Activated CD4-positive, alpha-beta memory T cell treated with anti-CD3 and anti-CD28 coated beads for 36 hours (primary cell): ENCODE measurements at regions of chr1 and their contacts with region 1.

Region 1: GRCh38 chr1:156480411-156481192 is 20.0 kb downstream of the MEF2D start:
- DNase-seq: peak; percentile 83
- H3K4me3 Mint-ChIP-seq: peak overlapping the region; percentile 39
- H3K27ac Mint-ChIP-seq: peak overlapping the region; percentile 79
- H3K4me1 Mint-ChIP-seq: peaks cover 66% of the 10 kb centered on the region
- H3K27me3 Mint-ChIP-seq: no peaks in the 10 kb centered on the region

Region 2: GRCh38 chr1:156465747-156466365 is 14.7 kb before region 1 on chr1:
- CTCF ChIA-PET with region 1: interaction called, 16 read pairs
- POLR2A ChIA-PET with region 1: interaction called, 3 read pairs
- intact Hi-C with region 1: no loop called
- DNase-seq: peak; percentile 35
- H3K4me3 Mint-ChIP-seq: no peak overlapping the region
- H3K27ac Mint-ChIP-seq: peak overlapping the region; percentile 12
- H3K4me1 Mint-ChIP-seq: peaks cover 8% of the 10 kb centered on the region
- H3K27me3 Mint-ChIP-seq: no peaks in the 10 kb centered on the region

Region 3: DNA sequence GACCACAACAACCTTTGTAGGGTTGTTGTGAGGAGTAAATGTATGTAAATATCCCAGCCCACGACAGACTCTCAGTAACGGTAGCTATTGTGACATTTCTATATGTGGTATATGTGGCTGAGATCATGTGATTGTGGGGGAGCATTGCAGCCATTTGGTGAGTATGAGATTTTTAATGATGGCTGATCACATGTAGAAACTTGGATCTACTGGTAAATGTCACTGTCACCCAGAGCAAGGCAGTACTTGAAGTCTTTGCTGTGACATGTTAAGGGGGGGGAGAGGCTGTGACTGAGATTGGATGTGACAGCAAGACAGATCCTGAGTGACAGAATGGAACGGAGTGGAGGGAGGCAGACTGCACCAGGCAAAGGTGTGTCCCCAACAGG is 43.9 kb after region 1 on chr1:
- CTCF ChIA-PET with region 1: interaction called, 16 read pairs
- POLR2A ChIA-PET with region 1: no interaction called
- intact Hi-C with region 1: no loop called
- DNase-seq: peak; percentile 22
- H3K4me3 Mint-ChIP-seq: no peak overlapping the region
- H3K27ac Mint-ChIP-seq: no peak overlapping the region
- H3K4me1 Mint-ChIP-seq: peaks cover 27% of the 10 kb centered on the region
- H3K27me3 Mint-ChIP-seq: no peaks in the 10 kb centered on the region

Region 4: GRCh38 chr1:156556354-156556753 is 75.8 kb after region 1 on chr1:
- CTCF ChIA-PET with region 1: interaction called, 11 read pairs
- POLR2A ChIA-PET with region 1: no interaction called
- intact Hi-C with region 1: no loop called
- DNase-seq: no peak
- H3K4me3 Mint-ChIP-seq: no peak overlapping the region
- H3K27ac Mint-ChIP-seq: no peak overlapping the region
- H3K4me1 Mint-ChIP-seq: peaks cover 2% of the 10 kb centered on the region
- H3K27me3 Mint-ChIP-seq: no peaks in the 10 kb centered on the region

Region 5: GRCh38 chr1:156583821-156584622 is 103.4 kb after region 1 on chr1:
- CTCF ChIA-PET with region 1: interaction called, 14 read pairs
- POLR2A ChIA-PET with region 1: no interaction called
- intact Hi-C with region 1: no loop called
- DNase-seq: peak; percentile 79
- H3K4me3 Mint-ChIP-seq: no peak overlapping the region
- H3K27ac Mint-ChIP-seq: no peak overlapping the region
- H3K4me1 Mint-ChIP-seq: peaks cover 2% of the 10 kb centered on the region
- H3K27me3 Mint-ChIP-seq: no peaks in the 10 kb centered on the region

Region 6: DNA sequence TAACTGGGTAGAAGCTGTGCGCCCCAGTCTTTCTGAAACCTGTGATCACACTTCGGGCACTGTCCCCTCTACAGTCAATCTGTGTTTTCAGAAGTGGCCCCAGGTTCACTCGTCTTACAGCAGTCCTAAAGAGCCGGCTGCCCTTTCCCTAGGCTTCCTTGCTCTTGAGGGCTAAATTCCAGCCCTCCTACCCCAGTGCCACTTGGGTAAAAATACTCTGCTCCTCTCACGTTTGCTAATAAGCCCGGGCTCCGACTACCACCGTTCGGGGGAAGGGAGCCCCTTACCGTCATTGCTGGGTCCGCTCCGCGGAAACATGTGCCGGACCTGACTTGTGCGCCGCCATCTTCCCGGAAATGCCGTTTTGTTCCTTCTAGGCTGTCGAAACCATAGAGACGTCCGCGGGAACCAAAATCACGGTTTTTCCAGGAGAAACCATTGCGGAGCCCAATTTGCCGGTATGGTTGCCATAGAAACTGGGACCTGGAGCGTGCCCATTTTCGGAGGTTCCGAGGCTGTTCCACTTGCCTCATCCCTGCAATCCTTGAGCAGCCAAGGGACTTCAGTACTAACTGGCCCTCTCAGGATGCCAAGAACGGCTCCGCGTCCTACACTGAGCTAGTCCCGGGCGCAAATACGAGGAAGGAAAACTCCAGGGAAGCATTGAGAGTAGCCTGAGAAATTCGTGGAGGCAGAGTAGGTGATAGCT is 120.7 kb after region 1 on chr1 and contains the start of gene GPATCH4:
- CTCF ChIA-PET with region 1: interaction called, 14 read pairs
- POLR2A ChIA-PET with region 1: interaction called, 6 read pairs
- intact Hi-C with region 1: no loop called
- DNase-seq: peak; percentile 88
- H3K4me3 Mint-ChIP-seq: peak within 1 kb of the TSS; percentile 94
- H3K27ac Mint-ChIP-seq: peak within 1 kb of the TSS; percentile 95
- H3K4me1 Mint-ChIP-seq: peaks cover 38% of the 10 kb centered on the region
- H3K27me3 Mint-ChIP-seq: no peaks in the 10 kb centered on the region
- total RNA-seq, gene GPATCH4: 40.2 to 43.2 TPM

Region 7: DNA sequence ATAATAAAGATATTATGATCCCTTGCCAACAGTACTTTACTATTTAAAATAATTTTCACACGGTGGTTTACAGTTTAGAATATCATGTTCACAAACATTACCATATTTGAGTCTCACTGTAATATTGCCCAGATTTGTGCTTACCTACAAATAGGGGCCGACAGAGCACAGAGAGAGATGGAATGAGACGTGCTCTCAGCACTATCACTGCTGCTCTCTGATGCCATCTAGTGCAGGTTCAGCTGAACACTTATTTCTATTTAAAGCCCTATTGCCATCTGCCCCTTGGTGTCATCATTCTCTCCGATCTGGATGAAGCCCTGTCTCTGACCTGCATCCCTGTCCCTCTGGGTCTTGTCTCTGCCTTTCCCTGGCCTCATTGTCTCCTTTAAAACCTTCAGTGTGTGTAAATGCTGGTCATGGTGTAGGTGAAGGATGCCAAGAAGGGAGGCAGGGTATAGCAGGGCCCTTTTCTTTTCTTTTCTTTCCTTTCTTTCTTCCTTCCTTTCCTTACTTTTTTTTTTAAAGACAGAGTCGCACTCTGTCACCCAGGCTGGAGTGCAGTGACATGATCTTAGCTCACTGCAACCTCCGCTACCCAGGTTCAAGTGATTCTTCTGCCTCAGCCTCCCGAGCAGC is 127.6 kb after region 1 on chr1:
- CTCF ChIA-PET with region 1: interaction called, 26 read pairs
- POLR2A ChIA-PET with region 1: no interaction called
- intact Hi-C with region 1: loop called (anchors 1 kb)
- DNase-seq: peak; percentile 66
- H3K4me3 Mint-ChIP-seq: no peak overlapping the region
- H3K27ac Mint-ChIP-seq: no peak overlapping the region
- H3K4me1 Mint-ChIP-seq: peaks cover 3% of the 10 kb centered on the region
- H3K27me3 Mint-ChIP-seq: peaks cover 9% of the 10 kb centered on the region